ENCODE measurements at regions of chr16 and their contacts with region 1.

Region 1: DNA sequence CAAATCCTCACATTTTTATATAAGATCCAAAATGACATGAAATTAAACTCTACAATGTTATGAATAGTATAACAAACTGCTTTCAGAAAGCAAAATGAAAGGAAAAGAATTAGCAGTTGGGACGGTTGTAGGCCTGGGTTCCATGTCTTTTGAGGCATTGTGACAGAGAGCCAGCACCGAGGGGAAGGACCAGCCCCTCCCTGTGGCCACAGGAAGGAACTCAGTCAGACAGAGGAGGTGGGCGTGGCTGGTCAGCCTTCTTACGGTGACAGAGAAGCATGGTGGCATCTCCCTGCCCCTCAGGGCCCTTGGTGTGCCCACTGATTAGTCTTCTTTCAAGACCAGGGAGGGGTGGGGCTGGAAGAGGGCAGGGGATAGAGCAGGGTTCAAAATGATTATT is 5.7 kb downstream of the ZNF319 start:
- DNase-seq: peak in 1 of 2 donors; percentile 47
- H3K4me3 ChIP-seq: no peak overlapping the region
- CTCF ChIP-seq: no peak
- POLR2A ChIP-seq: no peak

Region 2: DNA sequence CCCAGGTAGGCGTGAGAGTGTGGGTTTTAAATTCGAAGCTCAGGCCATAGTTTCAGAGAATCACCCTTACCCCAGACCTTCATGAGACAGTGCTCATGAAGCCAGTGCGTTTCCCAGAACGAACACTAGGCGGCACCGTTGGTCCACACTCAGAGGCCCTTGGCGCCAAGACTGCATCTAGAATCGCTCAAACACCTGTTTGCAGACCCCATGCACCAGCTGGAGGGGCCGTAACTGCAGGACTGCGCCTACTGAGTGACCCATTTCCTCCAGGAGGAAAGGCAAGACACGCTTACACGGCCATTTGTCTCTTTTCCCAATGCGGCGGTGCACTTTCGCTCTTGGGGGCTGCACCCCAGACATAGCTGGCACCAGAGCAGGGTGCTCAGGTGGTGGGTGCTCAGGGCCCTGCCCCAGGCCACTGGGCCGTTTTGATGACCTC is 418.3 kb before region 1 on chr16:
- intact Hi-C with region 1: loop called (anchors 10 kb)
- DNase-seq: peak; percentile 72 to 95
- H3K4me3 ChIP-seq: no peak overlapping the region
- CTCF ChIP-seq: peak in 2 of 3 donors; percentile 6 to 87
- POLR2A ChIP-seq: no peak

Region 3: DNA sequence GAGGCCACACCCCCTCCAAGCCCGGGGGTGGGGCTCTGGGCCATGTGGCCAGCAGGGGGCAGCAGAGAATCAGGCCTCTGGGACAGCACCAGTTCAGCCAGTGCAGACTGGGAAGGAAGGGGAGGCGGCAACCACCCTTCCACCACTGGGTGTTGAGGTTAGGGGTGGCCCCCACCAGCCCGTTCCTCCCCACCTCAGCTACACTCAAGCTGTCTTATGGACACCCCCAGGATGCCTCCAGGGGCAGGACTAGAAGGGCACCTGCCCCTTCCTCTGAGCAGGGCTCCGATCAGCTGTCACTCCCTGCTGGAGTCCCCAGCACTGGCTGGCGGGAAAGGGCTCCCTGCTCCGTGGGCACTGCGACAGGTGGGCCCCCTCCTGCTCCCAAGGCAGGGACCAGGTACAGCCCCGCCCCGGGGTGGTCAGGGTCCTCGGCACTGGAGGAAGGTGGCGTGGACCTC is 237.4 kb before region 1 on chr16:
- intact Hi-C with region 1: loop called (anchors 10 kb)
- DNase-seq: peak; percentile 83 to 98
- H3K4me3 ChIP-seq: no peak overlapping the region
- CTCF ChIP-seq: peak in 1 of 3 donors; percentile 83
- POLR2A ChIP-seq: no peak

Region 4: DNA sequence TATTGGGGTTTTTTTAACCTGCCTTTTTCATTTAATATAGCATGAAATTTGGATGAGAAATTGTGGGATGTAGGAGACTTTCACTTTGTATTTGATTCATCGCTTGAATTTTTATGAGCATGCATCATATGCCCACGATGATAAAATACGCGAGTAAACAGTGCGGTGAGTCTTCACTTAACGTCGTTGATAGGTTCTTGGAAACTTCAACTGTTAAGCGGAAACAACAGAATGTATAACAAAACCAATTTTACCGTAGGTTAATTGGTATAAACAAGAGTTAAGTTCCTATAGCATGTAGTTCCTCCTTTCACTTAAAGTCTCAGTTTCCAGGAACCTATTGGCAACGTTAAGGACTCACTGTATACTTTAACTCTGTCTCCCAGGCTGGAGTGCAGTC is 59.5 kb after region 1 on chr16:
- intact Hi-C with region 1: no loop called
- DNase-seq: no peak
- H3K4me3 ChIP-seq: no peak overlapping the region
- CTCF ChIP-seq: no peak
- POLR2A ChIP-seq: no peak

Measured in lower leg skin (tissue), 4 donors.